ENCODE measurements at regions of chr5 and their contacts with region 1.

Region 1: GRCh38 chr5:136202469-136203205 is 9.7 kb upstream of the SMIM32 start:
- DNase-seq: no peak
- H3K4me3 ChIP-seq: no peak overlapping the region
- H3K27ac ChIP-seq: no peak overlapping the region
- H3K4me1 ChIP-seq: peaks cover under 1% of the 10 kb centered on the region
- H3K27me3 ChIP-seq: no peaks in the 10 kb centered on the region
- CTCF ChIP-seq: no peak

Region 2: DNA sequence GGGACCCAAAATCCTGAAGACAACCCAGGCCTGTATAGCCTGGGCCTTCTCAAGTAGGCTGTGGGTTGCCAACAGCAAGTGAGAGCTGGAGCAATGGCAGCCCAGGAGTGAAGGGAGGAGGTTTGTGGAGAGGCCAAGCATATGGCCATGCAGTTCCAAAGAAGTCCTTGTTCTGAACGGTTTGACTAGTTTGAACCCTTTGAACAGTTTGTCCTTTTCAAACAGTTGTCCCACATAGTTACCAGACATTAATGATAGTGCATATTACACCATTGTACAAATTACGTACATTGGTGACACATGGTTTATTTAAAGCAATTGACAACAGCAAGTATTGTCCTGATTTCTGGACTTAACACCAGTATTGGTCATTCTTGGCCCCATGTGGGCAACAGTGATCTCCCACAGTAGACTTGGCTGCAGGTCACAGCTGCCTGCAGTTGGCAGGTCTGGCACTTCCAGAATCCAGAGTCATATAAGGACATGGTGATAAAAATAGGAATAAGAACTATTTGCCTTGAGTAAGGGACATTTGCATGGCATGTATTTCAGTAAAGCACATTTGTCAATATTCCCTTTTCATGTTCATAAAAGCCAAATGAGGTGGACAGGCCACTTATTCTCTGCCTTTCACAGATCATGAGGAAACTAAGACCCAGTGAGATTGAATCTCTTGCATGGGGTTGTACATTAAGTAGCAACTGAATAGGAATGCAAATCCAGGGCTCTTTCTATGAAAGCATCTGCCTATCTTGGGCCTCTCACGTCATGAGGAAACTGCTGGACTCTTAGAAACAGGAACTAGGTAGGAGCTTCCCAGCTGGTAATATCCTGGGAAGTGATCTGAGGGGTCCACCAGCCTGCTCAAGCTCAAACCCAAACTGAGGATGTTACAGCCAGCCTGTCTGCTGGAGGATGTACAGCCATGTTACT is 337.9 kb before region 1 on chr5:
- CTCF ChIA-PET with region 1: no interaction called
- POLR2A ChIA-PET with region 1: no interaction called
- intact Hi-C with region 1: no loop called
- DNase-seq: no peak
- H3K4me3 ChIP-seq: no peak overlapping the region
- H3K27ac ChIP-seq: no peak overlapping the region
- H3K4me1 ChIP-seq: no peaks in the 10 kb centered on the region
- H3K27me3 ChIP-seq: peaks cover 64% of the 10 kb centered on the region
- CTCF ChIP-seq: no peak

Region 3: DNA sequence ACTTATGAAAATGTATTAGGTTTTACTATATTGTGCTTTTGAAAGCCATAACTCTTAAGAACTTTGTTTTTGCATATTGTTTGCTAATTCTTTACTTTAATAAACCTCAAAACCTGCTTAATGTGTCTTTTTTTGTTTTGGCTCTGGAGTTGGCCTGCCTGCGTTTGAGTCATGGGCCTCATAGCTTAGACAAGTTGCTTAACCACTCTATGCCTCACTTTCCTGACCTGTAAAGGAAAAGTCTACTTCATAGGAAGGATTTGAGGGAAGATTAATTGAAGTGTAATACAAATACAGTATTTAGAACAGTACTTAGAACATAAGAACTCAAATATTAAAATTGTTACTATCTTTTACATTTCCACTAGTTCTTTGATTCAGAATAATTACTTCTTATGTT is 20.0 kb before region 1 on chr5:
- CTCF ChIA-PET with region 1: interaction called, 14 read pairs
- POLR2A ChIA-PET with region 1: no interaction called
- intact Hi-C with region 1: no loop called
- DNase-seq: no peak
- H3K4me3 ChIP-seq: no peak overlapping the region
- H3K27ac ChIP-seq: no peak overlapping the region
- H3K4me1 ChIP-seq: no peaks in the 10 kb centered on the region
- H3K27me3 ChIP-seq: no peaks in the 10 kb centered on the region
- CTCF ChIP-seq: no peak

Measured in PC-9 (cell line).